Natural killer cell (primary cell): ENCODE measurements at regions of chr1 and their contacts with region 1.

Region 1: DNA sequence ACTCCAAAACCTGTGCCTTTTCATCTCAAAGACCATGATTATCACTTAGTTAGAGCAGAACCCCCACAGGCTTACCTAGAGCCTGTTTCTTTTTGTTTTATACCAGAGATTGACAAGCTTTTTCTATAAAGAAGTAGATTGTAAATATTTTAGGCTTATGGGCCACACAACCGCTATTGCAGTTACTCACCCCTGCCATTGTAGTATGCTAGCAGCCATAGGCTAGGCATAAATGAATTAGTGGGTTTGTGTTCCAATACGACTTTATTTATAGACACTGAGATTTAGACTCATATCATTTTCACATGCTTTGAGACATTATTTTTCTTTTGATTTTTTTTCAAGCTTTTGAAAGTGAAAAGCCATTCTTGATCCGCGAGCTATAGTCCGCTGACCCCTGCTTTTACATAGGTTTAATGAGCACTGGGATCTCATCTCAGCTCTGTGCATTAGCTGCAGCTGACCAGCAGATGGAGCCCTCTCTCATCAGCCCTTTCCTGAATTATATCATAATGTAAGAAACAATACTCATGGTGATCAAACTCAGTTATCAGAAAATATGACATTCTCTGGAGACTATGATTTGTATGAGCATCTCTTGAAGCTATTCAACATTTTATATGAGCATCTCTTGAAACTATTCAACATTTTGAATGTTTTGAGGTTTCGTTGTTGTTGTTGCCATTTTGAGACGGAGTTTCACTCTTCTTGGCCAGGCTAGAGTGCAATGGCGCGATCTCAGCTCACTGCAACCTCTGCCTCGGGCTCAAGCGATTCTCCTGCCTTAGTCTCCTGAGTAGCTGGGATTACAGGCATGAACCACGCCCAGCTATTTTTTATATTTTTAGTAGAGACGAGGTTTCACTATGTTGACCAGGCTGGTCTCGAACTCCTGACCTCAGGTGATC is 111.9 kb upstream of the L1TD1 start:
- DNase-seq: peak in 1 of 2 donors; percentile 57
- ATAC-seq: peak in 2 of 3 donors; percentile 56 to 70
- H3K4me3 ChIP-seq: no peak overlapping the region
- H3K4me3 Mint-ChIP-seq: no peak overlapping the region
- H3K27ac ChIP-seq: no peak overlapping the region
- H3K27ac Mint-ChIP-seq: no peak overlapping the region
- H3K4me1 ChIP-seq: no peaks in the 10 kb centered on the region
- H3K4me1 Mint-ChIP-seq: no peaks in the 10 kb centered on the region
- H3K27me3 ChIP-seq: no peaks in the 10 kb centered on the region
- H3K27me3 Mint-ChIP-seq: no peaks in the 10 kb centered on the region
- CTCF ChIP-seq: peak; percentile 93

Region 2: DNA sequence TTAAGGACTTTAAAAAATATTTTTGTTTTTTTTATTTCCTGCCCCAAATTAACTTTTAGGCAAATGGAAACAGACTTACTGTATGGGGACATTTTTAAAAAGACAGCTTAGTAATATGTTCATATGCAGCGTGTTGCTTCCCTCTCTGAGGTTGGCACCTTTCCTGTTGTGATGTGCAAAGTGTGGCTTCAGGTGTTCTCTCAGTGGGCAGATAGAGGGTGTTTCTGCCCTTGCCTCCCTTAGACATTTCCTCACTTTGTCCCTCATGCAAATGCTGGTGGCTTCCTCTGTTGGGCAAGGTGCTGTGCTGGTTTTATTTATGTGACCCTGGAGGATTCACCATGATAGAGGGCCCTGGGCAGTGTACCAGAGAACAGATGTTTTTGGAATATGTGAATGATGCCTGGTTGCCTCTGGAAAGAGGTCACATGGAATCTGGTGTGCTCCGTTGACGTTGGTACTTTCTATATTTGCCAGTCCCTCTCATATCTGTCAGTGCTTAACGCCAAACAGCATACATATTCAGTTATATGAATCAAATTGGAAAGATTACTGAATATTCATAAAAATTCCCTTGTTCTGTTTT is 217.0 kb before region 1 on chr1:
- intact Hi-C with region 1: no loop called
- DNase-seq: no peak
- ATAC-seq: no peak
- H3K4me3 ChIP-seq: no peak overlapping the region
- H3K4me3 Mint-ChIP-seq: no peak overlapping the region
- H3K27ac ChIP-seq: no peak overlapping the region
- H3K27ac Mint-ChIP-seq: no peak overlapping the region
- H3K4me1 ChIP-seq: peaks cover 3% of the 10 kb centered on the region
- H3K4me1 Mint-ChIP-seq: peaks cover 0 to 4% of the 10 kb centered on the region in 2 donors
- H3K27me3 ChIP-seq: no peaks in the 10 kb centered on the region
- H3K27me3 Mint-ChIP-seq: no peaks in the 10 kb centered on the region
- CTCF ChIP-seq: no peak

Region 3: GRCh38 chr1:62407405-62408009 is 324.8 kb after region 1 on chr1:
- intact Hi-C with region 1: loop called (anchors 5 kb)
- DNase-seq: peak in 1 of 2 donors; percentile 74
- ATAC-seq: peak in 2 of 3 donors; percentile 44 to 55
- H3K4me3 ChIP-seq: no peak overlapping the region
- H3K4me3 Mint-ChIP-seq: no peak overlapping the region
- H3K27ac ChIP-seq: no peak overlapping the region
- H3K27ac Mint-ChIP-seq: no peak overlapping the region
- H3K4me1 ChIP-seq: no peaks in the 10 kb centered on the region
- H3K4me1 Mint-ChIP-seq: no peaks in the 10 kb centered on the region
- H3K27me3 ChIP-seq: no peaks in the 10 kb centered on the region
- H3K27me3 Mint-ChIP-seq: no peaks in the 10 kb centered on the region
- CTCF ChIP-seq: peak; percentile 87

Region 4: DNA sequence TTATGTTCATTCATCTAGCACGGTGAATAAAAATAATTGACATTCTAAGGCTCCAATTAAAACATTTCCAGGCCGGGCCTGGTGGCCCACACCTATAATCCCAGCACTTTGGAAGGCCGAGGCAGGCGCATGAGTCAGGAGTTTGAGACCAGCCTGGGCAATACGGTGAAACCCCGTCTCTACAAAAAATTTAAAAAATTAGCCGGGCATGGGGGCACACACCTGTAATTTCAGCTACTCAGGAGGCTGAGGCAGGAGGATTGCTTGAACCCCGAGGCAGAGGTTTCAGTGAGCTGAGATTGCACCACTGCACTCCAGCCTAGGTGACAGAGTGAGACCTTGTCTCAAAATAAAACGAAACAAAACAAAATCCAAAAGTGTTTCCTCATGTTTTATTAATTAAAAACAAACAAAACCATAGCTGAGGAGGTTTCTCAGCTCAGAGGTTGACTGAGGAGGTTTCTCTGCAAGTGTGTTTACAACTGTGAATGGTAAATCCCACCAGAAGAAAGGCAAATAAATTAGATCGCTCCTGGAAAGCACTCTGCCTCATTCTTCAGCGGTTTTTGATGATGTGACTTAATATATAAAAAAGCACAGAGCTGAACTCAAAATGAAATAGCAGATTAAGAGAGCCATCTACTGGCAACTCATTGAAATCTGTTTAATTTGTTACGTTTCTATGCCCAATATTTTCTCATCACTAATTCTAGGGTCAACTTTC is 663.5 kb after region 1 on chr1:
- intact Hi-C with region 1: loop called (anchors 2 kb)
- DNase-seq: peak in 1 of 2 donors; percentile 64
- ATAC-seq: no peak
- H3K4me3 ChIP-seq: no peak overlapping the region
- H3K4me3 Mint-ChIP-seq: no peak overlapping the region
- H3K27ac ChIP-seq: no peak overlapping the region
- H3K27ac Mint-ChIP-seq: no peak overlapping the region
- H3K4me1 ChIP-seq: no peaks in the 10 kb centered on the region
- H3K4me1 Mint-ChIP-seq: no peaks in the 10 kb centered on the region
- H3K27me3 ChIP-seq: peaks cover 3% of the 10 kb centered on the region
- H3K27me3 Mint-ChIP-seq: peaks cover 0 to 27% of the 10 kb centered on the region in 2 donors
- CTCF ChIP-seq: peak; percentile 60